A549 (cell line): ENCODE measurements at regions of chr10 and their contacts with region 1.

Region 1: GRCh38 chr10:101042667-101043355 is 11.8 kb downstream of the SFXN3 start:
- DNase-seq: peak; percentile 95 to 96
- ATAC-seq: peak; percentile 89 to 93
- H3K4me3 ChIP-seq: peak overlapping the region; percentile 47
- H3K27ac ChIP-seq: peak overlapping the region; percentile 83 to 93
- H3K4me1 ChIP-seq: peaks cover 24% of the 10 kb centered on the region
- CTCF ChIP-seq: no peak
- EP300 ChIP-seq: no peak
- POLR2A ChIP-seq: peak; percentile 55
- RAD21 ChIP-seq: no peak

Region 2: DNA sequence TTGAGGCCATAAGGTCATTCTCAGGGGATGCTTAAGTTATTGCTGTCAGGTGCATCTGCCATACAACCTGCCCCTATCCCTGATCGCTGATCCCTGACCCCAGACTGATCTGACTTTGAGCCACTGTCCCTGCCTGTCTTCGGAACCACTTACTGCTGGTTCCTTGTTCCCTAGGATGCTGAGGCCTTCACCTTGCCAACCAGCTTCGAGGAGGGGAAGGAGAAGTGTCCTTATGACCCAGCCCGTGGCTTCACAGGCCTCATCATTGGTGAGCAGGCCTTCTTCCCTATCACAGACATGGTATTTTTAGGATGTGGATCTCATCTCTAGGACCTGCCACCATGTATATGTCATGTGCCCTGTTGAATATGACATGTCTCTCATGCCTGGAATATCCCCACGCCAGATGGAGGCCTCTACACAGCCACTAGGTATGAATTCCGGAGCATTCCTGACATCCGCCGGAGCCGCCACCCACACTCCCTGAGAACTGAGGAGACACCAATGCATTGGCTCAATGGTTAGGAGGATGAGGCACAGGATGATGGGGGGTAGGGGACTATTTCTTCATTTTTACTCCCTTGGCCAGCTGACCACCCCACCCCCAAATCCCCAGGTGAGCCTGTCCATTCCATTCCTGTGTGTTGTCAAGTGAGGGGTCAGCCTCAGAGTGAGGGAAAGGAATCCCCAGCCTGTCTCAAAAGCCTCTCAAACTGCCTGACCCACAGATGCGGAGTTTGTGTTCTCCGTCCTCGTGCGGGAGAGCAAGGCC is 64.5 kb before region 1 on chr10:
- CTCF ChIA-PET with region 1: no interaction called
- POLR2A ChIA-PET with region 1: no interaction called
- DNase-seq: no peak
- ATAC-seq: no peak
- H3K4me3 ChIP-seq: no peak overlapping the region
- H3K27ac ChIP-seq: no peak overlapping the region
- H3K4me1 ChIP-seq: no peaks in the 10 kb centered on the region
- CTCF ChIP-seq: no peak
- EP300 ChIP-seq: no peak
- POLR2A ChIP-seq: no peak
- RAD21 ChIP-seq: no peak

Region 3: DNA sequence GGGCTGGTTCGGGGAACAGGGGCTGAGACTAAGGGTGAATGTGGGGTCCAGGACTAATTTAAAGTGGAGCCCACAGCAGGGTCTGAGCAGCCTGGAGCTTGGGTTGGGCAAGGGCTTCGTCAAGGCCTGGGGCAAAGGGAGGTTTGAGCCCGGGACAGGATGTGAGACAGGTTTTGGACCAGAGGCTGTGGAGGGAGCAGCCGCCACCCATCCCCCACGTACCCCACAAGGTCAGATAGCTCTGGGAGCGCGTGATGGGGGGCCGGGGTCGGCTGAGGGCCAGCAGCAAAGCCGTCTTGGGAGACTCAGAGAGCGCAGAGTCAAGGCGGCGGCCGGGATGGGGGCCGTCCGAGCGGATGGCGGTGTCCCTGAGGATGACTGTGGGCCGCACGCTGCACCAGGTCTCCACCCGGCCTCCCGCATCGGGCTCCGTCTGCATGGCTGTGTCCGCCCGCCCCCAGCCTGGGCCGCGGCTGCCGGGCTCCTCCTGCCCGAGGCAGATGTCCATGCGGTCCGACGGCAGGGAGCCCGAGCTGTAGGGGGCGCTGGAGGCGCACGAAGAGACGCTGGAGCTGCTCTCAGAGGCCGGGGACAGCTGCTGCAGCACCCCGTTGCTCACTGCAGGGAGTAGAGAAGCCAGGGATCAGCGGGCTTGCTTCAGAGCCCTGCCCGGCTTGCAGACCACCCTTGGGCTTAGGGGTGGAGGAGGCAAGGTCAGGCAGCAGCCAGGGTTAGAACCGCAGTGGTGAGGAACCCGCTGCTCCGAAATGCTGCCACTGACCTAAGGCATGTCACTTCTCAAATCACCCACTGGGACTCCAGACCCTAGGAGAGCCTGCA is 24.0 kb before region 1 on chr10:
- CTCF ChIA-PET with region 1: interaction called, 2,364 read pairs
- POLR2A ChIA-PET with region 1: no interaction called
- DNase-seq: peak; percentile 82 to 95
- ATAC-seq: peak; percentile 80 to 93
- H3K4me3 ChIP-seq: no peak overlapping the region
- H3K27ac ChIP-seq: peak overlapping the region; percentile 35 to 76; a peak in 4 of 6 replicates
- H3K4me1 ChIP-seq: peaks cover 14% of the 10 kb centered on the region
- CTCF ChIP-seq: peak; percentile 78
- EP300 ChIP-seq: no peak
- POLR2A ChIP-seq: no peak
- RAD21 ChIP-seq: peak; percentile 75 to 78

Region 4: DNA sequence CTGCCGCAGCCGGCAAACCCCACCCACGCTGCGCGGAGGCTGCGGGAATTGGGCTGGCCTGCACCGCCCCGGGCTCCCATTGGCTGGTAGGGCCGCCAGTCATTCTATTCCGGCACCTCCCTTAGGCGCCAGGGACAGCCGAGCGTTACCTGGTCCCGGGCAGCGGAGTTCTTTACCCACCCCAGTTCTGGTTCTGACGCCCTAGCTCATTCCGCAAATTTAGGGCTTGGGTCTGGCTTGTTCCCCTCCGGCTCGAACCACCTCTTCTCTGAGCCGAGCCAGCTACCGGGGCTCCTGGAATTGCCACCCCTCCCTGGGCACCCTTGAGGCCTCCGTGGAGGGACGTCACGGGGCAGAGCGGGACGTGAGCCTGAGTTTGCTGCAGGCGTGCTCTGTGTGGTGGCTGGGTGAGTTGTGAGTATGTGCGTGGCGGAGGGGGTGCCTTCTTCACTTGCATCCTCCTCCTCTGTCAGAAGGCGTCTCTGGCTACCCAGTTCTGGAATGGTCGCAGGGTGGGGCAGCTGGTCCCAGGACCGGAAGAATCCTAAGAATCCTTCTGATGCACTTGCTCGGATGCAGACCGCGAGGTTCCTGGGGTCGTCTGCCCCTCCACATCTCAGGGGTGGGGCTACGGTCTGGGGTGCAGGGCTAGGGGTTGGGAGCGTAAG is 11.5 kb before region 1 on chr10 and contains the starts of genes PDZD7 and SFXN3:
- CTCF ChIA-PET with region 1: interaction called, 2,364 read pairs
- POLR2A ChIA-PET with region 1: interaction called, 18 read pairs
- DNase-seq: peak; percentile 92 to 95
- ATAC-seq: peak; percentile 80 to 93
- H3K4me3 ChIP-seq: peak within 1 kb of the TSS; percentile 77
- H3K27ac ChIP-seq: peak within 1 kb of the TSS; percentile 75 to 92
- H3K4me1 ChIP-seq: peaks cover 27% of the 10 kb centered on the region
- CTCF ChIP-seq: no peak
- EP300 ChIP-seq: no peak
- POLR2A ChIP-seq: peak; percentile 27
- RAD21 ChIP-seq: no peak
- polyA plus RNA-seq, gene PDZD7: 0.20 and 0.21 TPM in 2 replicates
- polyA plus RNA-seq, gene SFXN3: 33.7 and 42.1 TPM in 2 replicates

Region 5: GRCh38 chr10:101060036-101060950 is 17.5 kb after region 1 on chr10:
- CTCF ChIA-PET with region 1: interaction called, 2,364 read pairs
- POLR2A ChIA-PET with region 1: interaction called, 39 read pairs
- DNase-seq: peak; percentile 91 to 95
- ATAC-seq: peak; percentile 51 to 80
- H3K4me3 ChIP-seq: peak overlapping the region; percentile 65
- H3K27ac ChIP-seq: peak overlapping the region; percentile 90 to 99
- H3K4me1 ChIP-seq: peaks cover 36% of the 10 kb centered on the region
- CTCF ChIP-seq: peak; percentile 95
- EP300 ChIP-seq: no peak
- POLR2A ChIP-seq: no peak
- RAD21 ChIP-seq: peak; percentile 85 to 87

Region 6: GRCh38 chr10:101067356-101068083 is 24.7 kb after region 1 on chr10:
- CTCF ChIA-PET with region 1: interaction called, 2,364 read pairs
- POLR2A ChIA-PET with region 1: interaction called, 39 read pairs
- DNase-seq: peak; percentile 84 to 90
- ATAC-seq: peak; percentile 37 to 67
- H3K4me3 ChIP-seq: peak overlapping the region; percentile 57
- H3K27ac ChIP-seq: peak overlapping the region; percentile 87 to 91
- H3K4me1 ChIP-seq: peaks cover 21% of the 10 kb centered on the region
- CTCF ChIP-seq: peak; percentile 89
- EP300 ChIP-seq: no peak
- POLR2A ChIP-seq: peak; percentile 21; the same call in 1 of the 2 replicates
- RAD21 ChIP-seq: peak; percentile 78 to 82

Region 7: DNA sequence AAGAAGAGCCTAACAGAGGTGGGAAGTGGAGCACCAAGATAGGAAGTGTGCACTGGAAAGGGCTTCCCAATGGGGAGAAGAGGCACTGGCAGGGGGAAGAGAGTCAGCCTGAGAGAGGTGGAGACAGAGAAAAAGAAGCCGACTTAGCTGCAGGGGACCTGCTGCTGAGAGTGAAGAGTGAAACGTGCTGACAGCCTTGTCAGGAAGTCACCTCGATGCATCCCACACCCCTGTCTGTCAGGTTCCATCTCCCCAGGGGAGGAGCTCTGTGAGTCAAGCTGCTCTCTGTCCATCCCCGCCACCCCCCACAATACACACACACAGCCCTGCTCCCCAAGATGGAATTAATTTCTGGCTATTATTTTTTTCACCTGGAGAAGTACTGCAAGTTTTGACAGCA is 33.0 kb after region 1 on chr10:
- CTCF ChIA-PET with region 1: interaction called, 2,364 read pairs
- POLR2A ChIA-PET with region 1: interaction called, 10 read pairs
- DNase-seq: no peak
- ATAC-seq: peak in 1 of 2 experiments; percentile 29; a peak in 3 of 6 replicates
- H3K4me3 ChIP-seq: no peak overlapping the region
- H3K27ac ChIP-seq: no peak overlapping the region
- H3K4me1 ChIP-seq: no peaks in the 10 kb centered on the region
- CTCF ChIP-seq: no peak
- EP300 ChIP-seq: no peak
- POLR2A ChIP-seq: no peak
- RAD21 ChIP-seq: no peak